A673 (cell line): ENCODE measurements at regions of chr10 and their contacts with region 1.

Region 1: GRCh38 chr10:63578501-63578900 is 57.3 kb downstream of the REEP3 start:
- DNase-seq: no peak
- H3K4me3 ChIP-seq: no peak overlapping the region
- H3K27ac ChIP-seq: no peak overlapping the region
- H3K4me1 ChIP-seq: peaks cover 18% of the 10 kb centered on the region
- H3K27me3 ChIP-seq: no peaks in the 10 kb centered on the region
- CTCF ChIP-seq: no peak

Region 2: DNA sequence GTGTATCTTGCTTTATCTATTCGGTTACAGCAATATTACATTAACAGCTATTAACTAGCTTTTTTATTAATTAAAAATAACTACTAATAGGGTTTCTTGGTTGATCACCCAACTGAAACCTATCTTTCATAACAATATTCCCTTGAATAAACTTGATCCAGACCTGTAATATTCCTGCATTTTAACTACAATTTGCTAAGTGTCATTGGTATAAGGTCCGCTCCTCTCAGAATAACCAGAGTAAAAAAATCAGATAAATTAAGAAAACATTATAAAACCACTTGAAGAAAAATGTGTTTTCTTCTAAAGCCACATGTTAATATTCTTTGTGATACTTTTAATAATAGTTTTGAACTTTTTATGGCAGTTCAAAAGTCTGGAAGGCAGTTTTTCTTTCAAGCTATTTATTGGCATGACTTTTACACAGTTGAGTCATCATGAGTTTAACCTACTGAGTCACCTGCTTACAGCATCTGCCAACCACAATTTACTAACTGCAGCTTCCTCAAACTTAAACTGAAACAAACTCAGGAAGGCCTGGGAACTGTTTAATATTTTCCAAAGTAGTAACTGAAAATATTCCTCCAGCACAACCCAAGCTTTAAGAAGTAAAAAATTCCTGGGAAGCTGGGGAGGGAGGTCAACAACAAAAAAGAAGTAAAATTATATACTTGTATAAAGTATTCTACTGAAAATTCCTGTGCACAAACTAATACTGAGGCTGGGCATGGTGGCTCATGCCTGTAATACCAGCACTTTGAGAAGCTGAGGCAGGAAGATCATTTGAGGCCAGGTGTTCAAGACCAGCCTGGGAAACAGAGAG is 342.2 kb before region 1 on chr10:
- CTCF ChIA-PET with region 1: no interaction called
- POLR2A ChIA-PET with region 1: interaction called, 10 read pairs
- intact Hi-C with region 1: no loop called
- DNase-seq: peak; percentile 41
- H3K4me3 ChIP-seq: no peak overlapping the region
- H3K27ac ChIP-seq: no peak overlapping the region
- H3K4me1 ChIP-seq: peaks cover 33% of the 10 kb centered on the region
- H3K27me3 ChIP-seq: no peaks in the 10 kb centered on the region
- CTCF ChIP-seq: no peak

Region 3: DNA sequence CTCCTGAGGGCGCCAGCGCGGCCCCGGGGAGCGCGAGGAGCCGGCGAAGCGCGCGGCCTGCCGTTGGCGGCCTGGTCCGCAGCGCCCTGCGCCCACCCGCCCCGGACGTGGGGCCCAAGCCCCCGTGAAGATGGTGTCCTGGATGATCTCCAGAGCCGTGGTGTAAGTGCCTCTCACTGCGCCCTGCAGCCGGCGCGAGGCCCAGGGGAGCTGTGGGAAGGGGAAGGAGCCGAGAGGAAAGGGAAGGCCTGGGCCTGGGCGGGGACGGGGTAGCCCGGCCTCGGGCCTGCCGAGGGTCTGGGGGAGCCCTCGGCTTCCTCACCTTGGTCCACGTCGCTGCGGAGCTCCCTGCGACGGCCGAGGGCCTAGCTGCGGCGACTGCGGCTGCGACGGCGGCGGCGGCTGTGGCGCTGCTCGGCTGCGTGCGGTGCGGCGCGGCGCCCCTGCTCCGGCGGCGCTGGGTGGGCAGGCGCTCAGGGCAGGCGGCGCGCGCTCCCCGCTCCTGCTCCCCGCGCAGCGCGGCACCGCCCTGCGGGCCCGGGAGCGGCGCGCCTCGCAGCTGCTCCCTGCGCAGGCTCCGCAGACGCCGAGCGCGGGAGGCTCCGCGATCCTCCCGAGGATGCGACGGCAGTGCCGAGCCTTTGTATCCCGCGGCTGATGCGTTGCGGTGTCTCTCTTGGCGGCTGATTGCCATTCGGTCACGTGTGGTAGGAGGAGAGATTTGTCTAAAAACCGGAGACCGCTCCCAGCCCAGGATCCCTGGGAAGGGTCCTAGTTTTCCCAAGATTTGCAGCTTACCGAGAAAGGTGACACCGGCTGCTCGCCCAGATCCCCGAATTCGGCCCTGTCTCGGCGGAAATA is 56.9 kb before region 1 on chr10:
- CTCF ChIA-PET with region 1: no interaction called
- POLR2A ChIA-PET with region 1: no interaction called
- intact Hi-C with region 1: no loop called
- DNase-seq: peak; percentile 89
- H3K4me3 ChIP-seq: peak overlapping the region; percentile 63
- H3K27ac ChIP-seq: peak overlapping the region; percentile 97
- H3K4me1 ChIP-seq: peaks cover 45% of the 10 kb centered on the region
- H3K27me3 ChIP-seq: no peaks in the 10 kb centered on the region
- CTCF ChIP-seq: no peak